ENCODE measurements at regions of chr12 and their contacts with region 1.

Region 1: GRCh38 chr12:11705010-11705409 is 55.5 kb downstream of the ETV6 start:
- DNase-seq: no peak
- H3K4me3 ChIP-seq: no peak overlapping the region
- H3K27ac ChIP-seq: peak overlapping the region; percentile 51 to 67
- H3K4me1 ChIP-seq: peaks cover 10% of the 10 kb centered on the region
- H3K27me3 ChIP-seq: no peaks in the 10 kb centered on the region
- CTCF ChIP-seq: no peak
- POLR2A ChIP-seq: no peak

Region 2: GRCh38 chr12:11648514-11648830 is 56.5 kb before region 1 on chr12:
- intact Hi-C with region 1: no loop called
- DNase-seq: no peak
- H3K4me3 ChIP-seq: peak overlapping the region; percentile 73 to 77
- H3K27ac ChIP-seq: peak overlapping the region; percentile 93 to 94
- H3K4me1 ChIP-seq: peaks cover 2% of the 10 kb centered on the region
- H3K27me3 ChIP-seq: no peaks in the 10 kb centered on the region
- CTCF ChIP-seq: peak in 1 of 4 experiments; percentile 10
- POLR2A ChIP-seq: no peak

Region 3: DNA sequence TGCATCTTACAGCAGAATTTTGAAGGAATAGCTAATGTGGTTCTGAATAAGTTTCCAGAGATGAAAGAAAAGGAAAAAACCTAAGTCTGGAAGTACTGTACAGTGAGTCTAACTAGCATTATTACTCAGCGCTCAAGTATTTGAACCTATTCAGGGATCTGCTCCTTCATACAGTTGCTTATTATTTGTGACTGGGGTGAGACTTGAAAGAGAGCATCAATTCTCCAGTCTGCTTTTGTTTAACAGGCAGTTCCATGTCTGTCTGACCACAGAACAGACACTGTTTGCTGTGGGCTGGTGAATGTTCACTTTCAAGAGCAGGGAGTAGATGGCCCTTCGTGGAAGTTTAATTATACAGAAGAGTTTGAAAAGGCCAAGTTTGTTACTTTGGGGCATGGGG is 46.2 kb before region 1 on chr12:
- intact Hi-C with region 1: loop called (anchors 5 kb)
- DNase-seq: no peak
- H3K4me3 ChIP-seq: no peak overlapping the region
- H3K27ac ChIP-seq: no peak overlapping the region
- H3K4me1 ChIP-seq: peaks cover 8% of the 10 kb centered on the region
- H3K27me3 ChIP-seq: no peaks in the 10 kb centered on the region
- CTCF ChIP-seq: no peak
- POLR2A ChIP-seq: no peak